HEK293T (cell line): ENCODE measurements at regions of chr2 and their contacts with region 1.

Region 1: DNA sequence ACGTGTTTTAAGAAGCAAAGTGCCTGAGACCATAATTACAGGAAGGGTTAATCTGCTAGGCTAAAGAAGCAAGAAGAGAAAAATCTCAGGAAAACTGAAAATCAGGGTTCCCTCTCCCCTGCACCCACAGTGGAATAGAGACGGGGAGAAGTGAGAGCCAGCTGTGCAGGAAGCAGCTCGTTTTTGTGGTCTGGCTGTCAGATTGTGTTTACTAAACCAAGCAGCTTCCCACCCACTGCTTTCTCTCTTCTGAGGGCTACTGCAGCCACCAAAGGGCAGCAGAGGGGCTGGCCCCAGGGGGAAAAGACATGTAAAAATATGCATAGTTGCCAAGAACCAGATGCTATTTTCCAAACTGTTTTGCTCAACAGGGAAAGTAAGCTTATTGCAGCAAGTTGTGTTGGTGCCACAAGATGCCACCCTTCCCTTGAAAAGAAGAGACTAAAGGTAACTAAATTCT is 72.6 kb upstream of the THUMPD2 start:
- DNase-seq: no peak

Region 2: GRCh38 chr2:39837856-39838453 is 13.7 kb before region 1 on chr2:
- CTCF ChIA-PET with region 1: interaction called, 11 read pairs
- POLR2A ChIA-PET with region 1: no interaction called
- DNase-seq: peak; percentile 63

Region 3: DNA sequence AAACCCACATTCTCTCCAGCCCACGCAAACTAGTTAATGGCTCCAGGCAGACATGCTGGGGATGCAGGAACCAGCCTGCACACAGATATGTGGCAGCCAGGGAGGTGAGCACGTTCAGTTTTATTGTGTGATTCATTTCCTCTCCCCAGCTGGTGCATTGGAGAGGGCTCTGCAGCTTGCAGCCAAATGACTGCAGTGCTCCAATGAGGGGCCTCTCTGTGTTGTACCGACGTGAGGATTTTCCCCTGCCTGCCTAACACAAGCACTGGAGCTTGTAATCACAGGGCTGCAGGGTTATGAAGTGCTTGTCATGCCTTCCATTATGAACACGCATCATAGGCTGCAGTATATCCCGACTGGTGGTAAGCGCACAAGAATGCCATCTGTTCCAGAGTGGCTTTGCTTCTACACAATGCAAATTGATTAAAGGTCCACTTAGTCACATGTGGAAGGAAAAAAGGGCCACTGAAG is 19.6 kb after region 1 on chr2:
- CTCF ChIA-PET with region 1: no interaction called
- POLR2A ChIA-PET with region 1: no interaction called
- DNase-seq: no peak

Region 4: GRCh38 chr2:40085786-40086185 is 234.1 kb after region 1 on chr2:
- CTCF ChIA-PET with region 1: no interaction called
- POLR2A ChIA-PET with region 1: no interaction called
- DNase-seq: no peak